Thyroid gland (tissue), 4 donors: ENCODE measurements at regions of chr1 and their contacts with region 1.

Region 1: GRCh38 chr1:86833461-86834215 is 80.3 kb downstream of the SELENOF start:
- DNase-seq: peak; percentile 67 to 76
- H3K4me3 ChIP-seq: no peak overlapping the region
- H3K27ac ChIP-seq: no peak overlapping the region
- H3K4me1 ChIP-seq: no peaks in the 10 kb centered on the region
- H3K27me3 ChIP-seq: no peaks in the 10 kb centered on the region
- CTCF ChIP-seq: peak in 5 of 6 experiments; percentile 39 to 70 (median 64)
- POLR2A ChIP-seq: no peak

Region 2: GRCh38 chr1:86648255-86648654 is 185.4 kb before region 1 on chr1:
- intact Hi-C with region 1: no loop called
- DNase-seq: no peak
- H3K4me3 ChIP-seq: no peak overlapping the region
- H3K27ac ChIP-seq: no peak overlapping the region
- H3K4me1 ChIP-seq: no peaks in the 10 kb centered on the region
- H3K27me3 ChIP-seq: no peaks in the 10 kb centered on the region
- CTCF ChIP-seq: no peak
- POLR2A ChIP-seq: no peak

Region 3: GRCh38 chr1:86866665-86867064 is 33.0 kb after region 1 on chr1:
- intact Hi-C with region 1: no loop called
- DNase-seq: no peak
- H3K4me3 ChIP-seq: no peak overlapping the region
- H3K27ac ChIP-seq: no peak overlapping the region
- H3K4me1 ChIP-seq: no peaks in the 10 kb centered on the region
- H3K27me3 ChIP-seq: no peaks in the 10 kb centered on the region
- CTCF ChIP-seq: no peak
- POLR2A ChIP-seq: no peak

Region 4: GRCh38 chr1:86965012-86965826 is 131.6 kb after region 1 on chr1:
- intact Hi-C with region 1: loop called (anchors 5 kb)
- DNase-seq: peak; percentile 10 to 20
- H3K4me3 ChIP-seq: no peak overlapping the region
- H3K27ac ChIP-seq: no peak overlapping the region
- H3K4me1 ChIP-seq: no peaks in the 10 kb centered on the region
- H3K27me3 ChIP-seq: no peaks in the 10 kb centered on the region
- CTCF ChIP-seq: peak; percentile 17 to 63 (median 46)
- POLR2A ChIP-seq: no peak

Region 5: DNA sequence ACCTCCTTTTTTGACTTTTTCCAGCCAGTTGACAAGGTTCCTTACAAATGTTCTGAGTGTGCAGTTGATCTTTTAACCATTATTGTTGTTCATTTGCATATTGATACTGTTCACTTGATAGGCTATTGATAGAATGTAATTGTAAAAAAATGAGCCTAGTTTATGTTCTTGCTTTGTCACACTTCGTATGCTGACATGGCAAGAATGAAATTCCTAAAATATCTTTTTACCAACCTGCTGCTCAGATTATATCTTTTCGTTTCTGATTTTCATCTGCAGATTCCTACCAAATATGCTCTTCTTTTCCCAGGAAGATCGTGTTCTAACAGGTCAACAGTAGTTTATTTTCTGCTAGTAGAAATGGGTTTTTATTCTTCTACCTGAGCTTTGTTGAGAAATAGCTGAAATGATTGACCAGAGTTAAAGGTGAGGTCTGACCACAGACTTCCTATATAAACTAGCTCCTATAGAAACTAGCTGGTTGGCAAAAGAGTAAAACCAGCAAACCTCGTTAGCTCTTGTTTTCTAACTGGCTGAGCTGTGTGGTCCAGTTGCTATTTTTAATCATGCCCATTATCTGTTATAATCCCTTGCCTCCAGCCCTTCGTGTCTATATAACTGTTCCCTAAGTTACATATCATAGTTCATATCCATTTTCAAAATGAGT is 255.6 kb after region 1 on chr1:
- intact Hi-C with region 1: loop called (anchors 5 kb)
- DNase-seq: no peak
- H3K4me3 ChIP-seq: no peak overlapping the region
- H3K27ac ChIP-seq: no peak overlapping the region
- H3K4me1 ChIP-seq: no peaks in the 10 kb centered on the region
- H3K27me3 ChIP-seq: no peaks in the 10 kb centered on the region
- CTCF ChIP-seq: no peak
- POLR2A ChIP-seq: no peak